GM10248 (cell line): ENCODE measurements at regions of chr10 and their contacts with region 1.

Region 1: GRCh38 chr10:52215745-52216361 is 98.2 kb upstream of the DKK1 start:
- DNase-seq: peak; percentile 39
- CTCF ChIP-seq: peak; percentile 79

Region 2: DNA sequence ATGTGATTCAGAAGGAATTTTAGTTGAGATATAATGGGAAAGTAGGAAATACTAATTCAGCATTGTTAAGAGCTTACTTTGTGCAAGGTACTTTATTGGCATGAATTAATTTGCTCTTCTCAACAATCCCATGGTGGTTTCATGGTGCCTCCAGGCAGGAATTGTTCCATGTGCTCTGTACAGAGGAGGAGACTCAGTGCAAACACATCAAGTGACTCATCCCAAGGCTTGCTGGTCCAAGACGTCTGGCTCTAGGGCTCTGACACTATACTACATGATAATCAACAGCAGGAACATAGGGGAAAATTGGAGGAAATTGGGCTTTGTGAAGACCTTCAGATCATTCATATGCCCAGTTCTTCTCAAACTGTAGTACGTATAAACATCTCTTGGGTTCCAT is 1208.1 kb before region 1 on chr10:
- CTCF ChIA-PET with region 1: interaction called, 10 read pairs
- POLR2A ChIA-PET with region 1: no interaction called
- DNase-seq: no peak
- CTCF ChIP-seq: no peak

Region 3: DNA sequence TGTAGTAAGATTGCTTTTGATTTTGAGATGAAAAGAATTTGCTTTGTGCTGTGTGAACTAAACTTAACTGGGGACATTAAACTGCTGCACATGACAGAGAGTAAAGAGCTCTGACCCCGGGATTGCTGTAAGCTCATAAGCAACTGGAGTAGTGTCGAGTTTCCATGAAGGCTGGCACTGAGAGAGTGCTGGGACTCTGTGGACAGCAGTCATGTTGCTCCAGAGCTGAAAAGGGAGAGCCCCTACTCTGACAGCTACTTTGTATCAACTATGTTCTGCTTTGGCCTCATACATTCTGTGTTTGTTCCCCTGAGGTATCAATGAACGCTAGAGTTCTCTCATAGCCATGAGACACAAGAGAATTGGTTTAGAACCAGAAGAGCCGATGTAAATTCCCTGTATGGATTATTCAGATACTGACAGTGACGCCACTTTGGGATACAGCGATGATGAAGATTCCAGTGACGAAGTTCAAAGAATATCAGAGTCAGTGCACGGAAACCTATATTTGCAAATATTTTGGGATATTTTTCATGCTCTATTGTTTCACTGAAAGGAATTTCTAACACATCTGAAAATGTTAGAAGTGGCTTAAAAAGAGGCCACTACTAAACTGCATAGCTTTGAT is 87.7 kb before region 1 on chr10:
- CTCF ChIA-PET with region 1: no interaction called
- POLR2A ChIA-PET with region 1: no interaction called
- DNase-seq: no peak
- CTCF ChIP-seq: no peak